ENCODE measurements at regions of chr10 and their contacts with region 1.

Region 1: DNA sequence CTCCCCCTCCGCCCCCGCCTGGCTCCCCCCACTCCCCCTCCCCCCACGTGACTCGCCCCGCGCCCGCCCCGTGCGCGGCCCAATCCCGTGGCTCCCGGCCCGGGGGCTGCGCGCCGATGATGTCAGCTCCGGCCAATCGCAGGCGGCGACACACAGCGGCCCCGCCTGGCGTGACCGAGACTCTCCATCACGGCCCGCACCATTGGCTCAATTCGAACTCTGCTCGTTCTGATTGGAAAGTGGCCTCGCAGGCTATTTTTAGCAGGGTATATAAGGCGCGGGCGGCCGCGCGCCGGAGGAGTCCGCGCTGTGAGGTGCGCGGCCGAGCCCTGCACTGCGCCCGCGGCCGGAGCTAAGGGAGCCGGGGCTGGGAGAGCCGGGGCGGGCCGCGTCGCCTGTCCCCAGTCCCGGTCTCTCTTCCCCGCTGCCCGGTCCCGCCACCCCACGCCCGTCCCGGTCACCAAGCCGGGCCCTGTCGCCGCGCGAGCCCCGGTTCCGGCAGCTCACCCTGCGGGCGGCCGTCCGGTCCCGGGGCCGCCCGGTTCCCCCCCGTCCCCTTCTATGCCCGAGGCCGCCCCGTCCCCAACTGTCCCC is 345 bp upstream of the KLF6 start:
- DNase-seq: peak; percentile 99
- H3K4me3 Mint-ChIP-seq: peak overlapping the region; percentile 96
- H3K27ac Mint-ChIP-seq: peak overlapping the region; percentile 99
- H3K4me1 Mint-ChIP-seq: peaks cover 30% of the 10 kb centered on the region
- H3K27me3 Mint-ChIP-seq: no peaks in the 10 kb centered on the region

Region 2: GRCh38 chr10:2772816-2773631 is 1012.3 kb before region 1 on chr10:
- CTCF ChIA-PET with region 1: no interaction called
- intact Hi-C with region 1: no loop called
- DNase-seq: no peak
- H3K4me3 Mint-ChIP-seq: no peak overlapping the region
- H3K27ac Mint-ChIP-seq: no peak overlapping the region
- H3K4me1 Mint-ChIP-seq: no peaks in the 10 kb centered on the region
- H3K27me3 Mint-ChIP-seq: peaks cover 8% of the 10 kb centered on the region

Region 3: DNA sequence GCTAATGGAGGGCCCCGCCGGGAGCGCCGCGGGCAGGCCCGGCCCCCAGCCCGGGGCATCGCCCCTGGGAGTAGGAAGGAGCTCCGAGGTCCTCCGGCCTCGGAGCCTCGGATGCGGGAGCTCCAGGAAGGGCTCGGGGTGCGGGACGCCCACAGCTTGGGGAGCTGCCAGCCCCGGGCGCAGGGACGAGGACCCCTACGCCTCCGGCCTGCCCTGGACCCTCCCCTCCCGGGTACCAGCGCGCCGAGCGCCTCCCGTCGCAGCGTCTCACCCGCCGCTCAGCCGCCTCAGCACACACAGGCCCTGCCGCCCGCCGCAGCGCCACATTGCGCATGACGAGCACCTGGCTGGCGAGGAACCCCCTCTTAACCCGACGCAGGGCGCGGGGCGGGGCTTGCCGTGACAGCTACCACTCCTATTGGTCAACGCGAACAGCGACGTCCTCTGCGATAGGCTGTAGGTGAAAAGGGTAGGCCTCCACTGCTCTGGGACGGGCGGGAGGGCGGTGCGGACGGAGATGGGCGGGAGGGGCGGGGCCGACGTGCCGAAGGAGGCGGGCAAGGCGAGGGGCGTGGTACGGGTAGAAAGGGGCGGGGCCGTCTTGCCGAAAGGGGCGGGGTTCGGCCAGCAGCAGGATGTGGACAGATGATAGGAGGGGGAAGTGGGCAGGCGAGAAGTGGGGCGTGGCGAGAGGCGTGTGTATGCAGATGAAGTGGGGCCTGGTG is 612.7 kb before region 1 on chr10 and contains the start of gene PITRM1:
- CTCF ChIA-PET with region 1: no interaction called
- intact Hi-C with region 1: loop called (anchors 1 kb)
- DNase-seq: peak; percentile 99
- H3K4me3 Mint-ChIP-seq: peak within 1 kb of the TSS; percentile 87
- H3K27ac Mint-ChIP-seq: peak within 1 kb of the TSS; percentile 89
- H3K4me1 Mint-ChIP-seq: peaks cover 23% of the 10 kb centered on the region
- H3K27me3 Mint-ChIP-seq: no peaks in the 10 kb centered on the region
- total RNA-seq, gene PITRM1: 65.6 to 74.5 TPM

Region 4: GRCh38 chr10:3605882-3606281 is 179.5 kb before region 1 on chr10:
- CTCF ChIA-PET with region 1: no interaction called
- intact Hi-C with region 1: loop called (anchors 2 kb)
- DNase-seq: no peak
- H3K4me3 Mint-ChIP-seq: no peak overlapping the region
- H3K27ac Mint-ChIP-seq: peak overlapping the region; percentile 15
- H3K4me1 Mint-ChIP-seq: peaks cover 10% of the 10 kb centered on the region
- H3K27me3 Mint-ChIP-seq: peaks cover 2% of the 10 kb centered on the region

Region 5: GRCh38 chr10:3805791-3806461 is 20.6 kb after region 1 on chr10:
- CTCF ChIA-PET with region 1: interaction called, 3 read pairs
- intact Hi-C with region 1: loop called (anchors 1 kb)
- DNase-seq: peak; percentile 45
- H3K4me3 Mint-ChIP-seq: peak overlapping the region; percentile 10
- H3K27ac Mint-ChIP-seq: no peak overlapping the region
- H3K4me1 Mint-ChIP-seq: peaks cover 73% of the 10 kb centered on the region
- H3K27me3 Mint-ChIP-seq: no peaks in the 10 kb centered on the region

Region 6: GRCh38 chr10:3852147-3852904 is 67.0 kb after region 1 on chr10:
- CTCF ChIA-PET with region 1: no interaction called
- intact Hi-C with region 1: loop called (anchors 1 kb)
- DNase-seq: peak; percentile 85
- H3K4me3 Mint-ChIP-seq: no peak overlapping the region
- H3K27ac Mint-ChIP-seq: peak overlapping the region; percentile 88
- H3K4me1 Mint-ChIP-seq: peaks cover 49% of the 10 kb centered on the region
- H3K27me3 Mint-ChIP-seq: no peaks in the 10 kb centered on the region

Region 7: DNA sequence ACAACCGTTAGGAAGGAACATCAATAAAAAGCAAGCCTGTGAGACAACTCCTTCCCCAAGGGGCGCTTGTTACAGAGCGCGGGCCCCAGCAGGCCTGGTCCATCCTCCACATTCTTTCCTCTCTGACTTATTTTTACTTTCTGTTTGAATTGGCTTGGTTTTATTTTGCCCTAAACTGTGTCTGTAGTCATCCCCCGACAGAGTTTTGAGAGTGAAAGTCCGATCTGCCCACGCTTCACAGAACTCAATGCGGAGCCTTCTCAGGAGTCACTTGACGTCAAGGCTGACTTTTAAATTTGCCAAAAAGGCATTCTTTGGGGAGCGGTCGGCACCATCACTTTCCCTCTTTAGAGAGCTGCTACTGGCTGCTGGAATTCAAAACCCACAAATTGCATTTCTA is 149.8 kb after region 1 on chr10:
- CTCF ChIA-PET with region 1: interaction called, 3 read pairs
- intact Hi-C with region 1: loop called (anchors 1 kb)
- DNase-seq: peak; percentile 92
- H3K4me3 Mint-ChIP-seq: peak overlapping the region; percentile 10
- H3K27ac Mint-ChIP-seq: peak overlapping the region; percentile 88
- H3K4me1 Mint-ChIP-seq: peaks cover 40% of the 10 kb centered on the region
- H3K27me3 Mint-ChIP-seq: no peaks in the 10 kb centered on the region